CD4-positive, alpha-beta T cell (primary cell): ENCODE measurements at regions of chr22 and their contacts with region 1.

Region 1: DNA sequence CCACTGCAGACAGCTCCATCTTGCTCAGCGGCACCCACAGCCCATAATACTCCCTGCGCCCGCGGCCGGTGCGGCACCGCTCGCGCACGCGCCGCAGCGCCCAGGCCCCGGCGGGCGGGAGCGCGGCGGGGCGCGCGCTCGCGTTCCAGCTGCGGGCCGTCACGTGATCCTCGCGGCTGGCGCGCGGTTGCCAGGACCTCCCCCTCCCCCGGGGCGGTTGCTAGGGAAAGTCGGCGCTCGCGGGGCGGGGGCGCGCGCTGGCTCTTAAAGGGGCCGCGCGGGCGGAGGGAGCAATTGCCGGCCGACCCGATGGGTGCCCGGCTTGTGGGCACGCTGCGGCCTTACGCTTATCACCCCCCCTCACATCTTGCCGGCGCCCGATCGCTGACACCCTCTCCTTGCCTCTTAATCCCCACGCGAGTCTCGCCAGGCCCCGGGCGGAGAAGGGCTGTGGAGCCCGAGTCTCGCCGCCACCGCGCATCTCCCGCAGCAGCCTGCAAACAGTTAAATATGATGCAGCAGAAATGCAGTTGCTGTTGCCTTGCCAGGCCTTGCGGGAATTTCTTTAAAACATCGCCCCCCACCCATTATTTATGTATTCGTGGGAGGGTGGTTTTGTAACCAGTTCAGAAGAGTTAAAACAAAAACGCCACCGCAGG is at the start of gene CBX6:
- DNase-seq: peak; percentile 90 to 98 (median 94)
- ATAC-seq: peak; percentile 75
- H3K4me3 ChIP-seq: peak within 1 kb of the TSS; percentile 82
- H3K4me3 Mint-ChIP-seq: peak within 1 kb of the TSS; percentile 96
- H3K27ac ChIP-seq: peak within 1 kb of the TSS; percentile 58 to 73
- H3K27ac Mint-ChIP-seq: peak within 1 kb of the TSS; percentile 92
- H3K4me1 ChIP-seq: peaks cover 62% of the 10 kb centered on the region
- H3K4me1 Mint-ChIP-seq: peaks cover 63% of the 10 kb centered on the region
- H3K27me3 ChIP-seq: no peaks in the 10 kb centered on the region
- H3K27me3 Mint-ChIP-seq: no peaks in the 10 kb centered on the region
- CTCF ChIP-seq: no peak
- total RNA-seq, gene CBX6: 41.6 to 42.8 TPM

Region 2: GRCh38 chr22:38793721-38794466 is 78.4 kb before region 1 on chr22 and contains the start of gene DNAL4:
- CTCF ChIA-PET with region 1: no interaction called
- POLR2A ChIA-PET with region 1: interaction called, 4 read pairs
- intact Hi-C with region 1: loop called in 1 of 2 experiments (anchors 2 kb)
- DNase-seq: peak; percentile 82 to 98 (median 89)
- ATAC-seq: peak; percentile 98
- H3K4me3 ChIP-seq: peak within 1 kb of the TSS; percentile 69
- H3K4me3 Mint-ChIP-seq: peak within 1 kb of the TSS; percentile 96
- H3K27ac ChIP-seq: peak within 1 kb of the TSS in 1 of 2 donors; percentile 43
- H3K27ac Mint-ChIP-seq: peak within 1 kb of the TSS; percentile 90
- H3K4me1 ChIP-seq: peaks cover 22% of the 10 kb centered on the region
- H3K4me1 Mint-ChIP-seq: peaks cover 46% of the 10 kb centered on the region
- H3K27me3 ChIP-seq: peaks cover 0 to 2% of the 10 kb centered on the region in 2 experiments
- H3K27me3 Mint-ChIP-seq: peaks cover 4% of the 10 kb centered on the region
- CTCF ChIP-seq: no peak
- total RNA-seq, gene DNAL4: 1.9 to 2.7 TPM

Region 3: DNA sequence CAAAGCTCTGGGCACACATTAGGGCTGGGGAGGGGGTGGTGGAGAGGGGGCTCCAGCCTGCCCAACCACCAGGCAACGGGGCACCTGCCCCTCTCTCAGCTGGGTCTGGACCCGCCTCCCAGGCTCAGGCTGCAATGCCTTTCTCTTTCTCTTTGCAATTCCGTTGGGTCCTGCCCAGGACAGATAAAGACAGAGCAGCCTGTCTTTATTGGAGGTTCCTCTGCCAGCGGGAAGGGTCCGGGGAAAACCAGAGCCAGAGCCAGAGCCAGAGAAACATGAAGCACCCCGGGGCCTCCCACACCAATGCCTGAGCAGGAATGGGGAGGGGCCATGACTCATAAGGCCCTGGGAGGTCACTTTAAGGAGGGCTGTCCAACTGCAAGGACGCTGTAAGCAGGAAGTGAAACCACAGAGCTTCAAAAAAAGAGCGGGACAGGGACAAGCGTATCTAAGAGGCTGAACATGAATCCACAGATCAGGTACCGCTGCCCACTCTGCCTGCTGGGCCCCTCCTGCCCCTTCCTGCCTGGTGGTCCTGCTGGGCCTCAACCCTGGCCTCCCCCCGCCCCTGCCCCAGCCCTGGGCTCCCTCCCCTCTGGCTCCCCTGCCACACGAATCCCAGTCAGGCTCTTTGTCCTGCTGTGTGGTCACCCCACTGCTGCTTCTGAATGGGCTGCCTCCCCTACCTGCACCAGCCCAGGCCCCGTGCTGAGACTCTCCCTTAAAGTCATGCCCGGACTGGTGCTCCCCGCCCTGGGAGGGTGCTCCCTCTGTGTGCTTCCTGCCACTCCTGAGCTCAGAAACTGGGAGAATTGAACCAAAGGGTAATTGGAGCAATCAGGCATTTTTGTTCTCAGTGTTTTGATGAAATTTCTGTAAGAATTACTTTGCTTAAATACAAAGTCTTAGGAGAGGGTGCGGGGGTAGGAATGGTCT is 110.0 kb after region 1 on chr22 and contains the start of gene APOBEC3B:
- CTCF ChIA-PET with region 1: no interaction called
- POLR2A ChIA-PET with region 1: interaction called, 3 read pairs
- intact Hi-C with region 1: loop called in 1 of 2 experiments (anchors 5 kb)
- DNase-seq: peak in 13 of 14 experiments; percentile 15 to 92 (median 51)
- ATAC-seq: peak; percentile 49
- H3K4me3 ChIP-seq: peak within 1 kb of the TSS; percentile 45
- H3K4me3 Mint-ChIP-seq: peak within 1 kb of the TSS; percentile 88
- H3K27ac ChIP-seq: no peak within 1 kb of the TSS
- H3K27ac Mint-ChIP-seq: peak within 1 kb of the TSS; percentile 64
- H3K4me1 ChIP-seq: peaks cover 62% of the 10 kb centered on the region
- H3K4me1 Mint-ChIP-seq: peaks cover 26% of the 10 kb centered on the region
- H3K27me3 ChIP-seq: no peaks in the 10 kb centered on the region
- H3K27me3 Mint-ChIP-seq: no peaks in the 10 kb centered on the region
- CTCF ChIP-seq: no peak
- total RNA-seq, gene APOBEC3B: not detected

Region 4: GRCh38 chr22:39123751-39124601 is 251.7 kb after region 1 on chr22:
- CTCF ChIA-PET with region 1: interaction called, 4 read pairs
- POLR2A ChIA-PET with region 1: no interaction called
- intact Hi-C with region 1: loop called in 1 of 2 experiments (anchors 2 kb)
- DNase-seq: no peak
- ATAC-seq: no peak
- H3K4me3 ChIP-seq: no peak overlapping the region
- H3K4me3 Mint-ChIP-seq: no peak overlapping the region
- H3K27ac ChIP-seq: no peak overlapping the region
- H3K27ac Mint-ChIP-seq: no peak overlapping the region
- H3K4me1 ChIP-seq: peaks cover 2% of the 10 kb centered on the region
- H3K4me1 Mint-ChIP-seq: peaks cover 6% of the 10 kb centered on the region
- H3K27me3 ChIP-seq: no peaks in the 10 kb centered on the region
- H3K27me3 Mint-ChIP-seq: no peaks in the 10 kb centered on the region
- CTCF ChIP-seq: no peak